Right ventricle myocardium inferior (tissue), 1 donor: ENCODE measurements at regions of chr7 and their contacts with region 1.

Region 1: DNA sequence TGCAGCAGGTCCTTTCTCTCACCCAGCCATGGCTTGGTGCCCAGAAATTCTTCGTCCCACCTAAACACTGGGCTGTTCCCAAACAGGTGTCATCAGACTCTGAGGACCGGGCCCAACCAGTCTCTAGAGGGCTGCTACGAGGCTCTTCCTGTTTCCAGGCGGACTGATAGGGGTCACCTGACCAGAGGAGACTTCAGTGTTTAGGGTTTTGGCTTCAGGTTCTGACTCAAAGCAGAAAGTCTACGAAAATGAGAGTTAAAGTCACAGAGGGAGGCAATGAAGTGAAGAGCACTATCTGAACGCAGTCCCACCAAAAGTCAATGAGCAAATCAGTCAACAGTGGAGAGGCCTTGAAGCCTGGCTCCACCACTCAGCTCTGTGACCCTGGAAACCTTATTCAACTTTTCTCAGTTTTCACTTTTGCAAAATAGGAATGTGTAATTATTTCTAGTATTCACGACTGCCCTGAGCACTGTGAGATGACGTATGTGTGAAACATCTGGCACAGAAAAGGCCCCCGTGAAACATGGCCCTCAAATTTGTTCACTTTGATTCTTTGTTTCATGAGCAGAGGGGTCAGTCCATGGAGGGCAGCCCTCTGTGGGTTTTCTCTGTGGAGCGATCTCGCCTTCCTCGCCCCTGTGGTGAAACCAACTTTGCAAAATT is 189.9 kb upstream of the PDE1C start:
- DNase-seq: no peak
- ATAC-seq: peak; percentile 53

Region 2: GRCh38 chr7:32289651-32290414 is 29.8 kb after region 1 on chr7:
- intact Hi-C with region 1: loop called (anchors 5 kb)
- DNase-seq: peak; percentile 72
- ATAC-seq: peak; percentile 89

Region 3: GRCh38 chr7:32335107-32335506 is 75.0 kb after region 1 on chr7:
- intact Hi-C with region 1: loop called (anchors 10 kb)
- DNase-seq: no peak
- ATAC-seq: peak; percentile 55

Region 4: GRCh38 chr7:32948202-32948601 is 688.1 kb after region 1 on chr7:
- intact Hi-C with region 1: no loop called
- DNase-seq: no peak
- ATAC-seq: no peak